ENCODE measurements at regions of chr1 and their contacts with region 1.

Region 1: DNA sequence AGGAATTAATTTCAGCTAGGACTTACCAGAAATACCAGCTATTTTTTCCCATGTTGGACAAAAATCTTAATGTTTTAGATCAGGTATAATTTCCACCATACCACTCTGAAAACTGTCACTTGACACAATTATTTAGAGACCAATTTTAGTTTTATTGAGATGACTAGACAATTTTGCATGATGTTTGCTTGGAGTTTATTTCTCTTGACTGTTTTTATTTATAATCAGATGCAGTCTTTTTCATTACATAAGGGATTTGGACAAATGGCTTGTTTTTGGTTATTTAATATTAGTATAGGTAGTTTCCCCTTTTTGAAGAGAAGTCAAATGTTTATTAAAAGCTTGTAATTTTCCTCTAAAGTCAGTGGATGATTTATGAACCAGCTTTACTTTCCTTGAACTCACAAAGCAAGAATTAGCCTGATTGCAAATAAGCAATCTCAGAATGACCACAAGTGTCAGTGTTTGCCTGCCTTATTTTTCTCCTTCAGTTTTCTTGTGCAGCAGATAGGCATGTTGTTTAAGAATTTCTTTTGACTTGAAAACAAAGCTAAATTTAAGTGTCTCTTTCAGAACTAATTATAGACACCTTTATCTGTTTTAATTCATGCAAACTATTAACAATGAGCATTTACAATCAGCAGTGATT is 3.8 kb upstream of the B3GALT2 start:
- DNase-seq: peak; percentile 44
- H3K4me3 ChIP-seq: no peak overlapping the region
- H3K27ac ChIP-seq: no peak overlapping the region
- H3K4me1 ChIP-seq: peaks cover 44% of the 10 kb centered on the region
- H3K27me3 ChIP-seq: no peaks in the 10 kb centered on the region

Region 2: DNA sequence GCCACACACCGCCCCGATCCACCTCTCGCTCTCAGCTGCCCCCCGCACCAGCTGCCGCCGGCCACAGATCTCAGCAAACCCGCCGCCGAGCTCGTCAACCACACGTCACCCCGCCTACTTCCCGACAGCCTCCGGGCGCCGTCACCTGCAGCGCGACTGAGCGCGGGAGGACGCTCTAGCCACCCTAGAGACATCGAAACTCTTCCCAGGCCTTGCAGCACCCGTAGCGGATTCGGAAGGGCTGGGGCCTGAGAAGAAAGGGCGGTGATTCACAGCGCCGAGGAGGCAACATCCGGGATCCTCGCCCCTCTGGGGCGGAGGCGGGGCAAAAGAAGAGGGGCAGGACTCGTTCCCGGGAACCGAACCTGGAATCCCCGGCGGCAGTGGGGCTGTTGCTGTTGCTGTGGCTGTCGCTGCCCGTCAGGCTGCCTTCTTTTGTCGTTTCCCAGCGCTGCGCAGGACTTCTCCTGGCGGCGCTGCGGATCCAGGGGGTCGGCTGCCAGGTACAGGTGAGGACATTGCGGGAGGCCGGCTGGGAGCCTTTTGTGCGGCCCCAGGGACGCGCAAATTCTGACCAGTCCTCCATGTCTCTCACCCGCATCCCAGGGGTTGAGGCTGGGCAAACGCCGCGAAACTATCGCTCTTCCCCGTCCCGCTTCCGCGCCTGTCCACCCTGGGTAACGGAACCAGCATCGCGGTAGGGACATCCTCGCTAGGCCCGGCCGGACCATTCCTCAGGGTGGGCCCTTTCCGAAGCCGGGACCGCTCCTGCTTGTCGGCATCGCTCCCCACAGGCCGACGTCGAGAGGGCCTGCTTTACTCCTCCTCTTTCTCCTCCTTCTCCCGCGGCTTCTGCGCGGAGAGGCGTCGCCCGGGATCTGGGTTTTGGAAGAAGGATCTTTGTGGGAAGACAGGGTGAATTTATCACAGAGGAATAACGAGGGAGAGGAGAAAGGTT is 130.7 kb before region 1 on chr1 and contains the starts of genes RO60 and UCHL5:
- in situ Hi-C with region 1: no loop called
- DNase-seq: peak; percentile 99
- H3K4me3 ChIP-seq: peak within 1 kb of the TSS; percentile 91
- H3K27ac ChIP-seq: peak within 1 kb of the TSS; percentile 97
- H3K4me1 ChIP-seq: peaks cover 42% of the 10 kb centered on the region
- H3K27me3 ChIP-seq: no peaks in the 10 kb centered on the region
- total RNA-seq, gene RO60: 68.6 and 71.3 TPM in 2 replicates
- total RNA-seq, gene UCHL5: 17.5 and 22.5 TPM in 2 replicates

Region 3: DNA sequence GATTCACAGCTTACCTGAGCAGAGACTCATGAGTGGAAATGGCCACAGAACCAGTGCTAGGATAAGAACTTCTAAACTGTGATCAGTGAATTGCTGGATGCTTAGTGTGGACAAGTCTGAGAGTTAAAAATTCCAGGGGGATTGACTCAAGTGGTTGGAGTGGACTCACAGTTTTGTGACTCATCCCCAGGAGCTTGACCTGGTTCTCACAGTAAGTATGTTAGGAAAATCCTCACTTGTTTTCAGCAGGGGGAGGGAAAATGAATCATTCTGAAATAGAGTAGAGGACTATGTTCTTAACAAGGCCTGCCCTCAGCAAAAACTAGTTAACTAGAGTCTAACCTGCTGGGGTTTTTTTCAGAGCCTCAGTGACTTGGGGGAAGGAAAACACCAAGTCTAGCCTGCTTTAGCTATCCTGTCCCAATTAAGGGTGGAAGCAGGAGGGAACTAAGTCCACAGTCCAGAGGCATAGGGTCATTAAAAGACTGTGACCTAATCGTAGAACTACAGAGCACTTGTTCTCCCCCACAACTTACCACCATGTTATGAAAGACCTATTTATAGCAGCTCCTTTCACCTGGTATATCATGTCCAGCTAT is 74.5 kb before region 1 on chr1:
- in situ Hi-C with region 1: no loop called
- DNase-seq: peak; percentile 99
- H3K4me3 ChIP-seq: peak overlapping the region; percentile 45; the same call in 1 of the 2 replicates
- H3K27ac ChIP-seq: peak overlapping the region; percentile 86
- H3K4me1 ChIP-seq: peaks cover 46% of the 10 kb centered on the region
- H3K27me3 ChIP-seq: no peaks in the 10 kb centered on the region

Region 4: DNA sequence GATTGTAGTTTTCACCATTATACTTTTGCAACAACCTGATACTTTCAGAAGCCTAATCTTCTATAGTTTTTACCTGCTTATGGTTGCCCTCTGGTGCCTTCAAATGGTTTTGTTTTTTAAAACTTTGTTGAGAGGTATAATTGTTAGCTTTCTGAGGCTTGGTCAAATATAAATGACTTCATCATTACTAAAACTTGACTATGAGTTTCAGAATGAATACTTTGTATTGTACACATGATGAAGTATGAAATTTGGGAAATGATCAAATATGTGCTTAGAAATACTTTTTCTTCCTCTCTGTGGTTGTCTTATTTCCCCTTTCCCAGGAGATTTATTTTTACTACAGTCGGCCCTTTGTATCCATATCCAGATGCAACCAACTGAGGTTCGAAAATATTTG is 148.0 kb after region 1 on chr1:
- in situ Hi-C with region 1: loop called (anchors 10 kb)
- DNase-seq: peak; percentile 52
- H3K4me3 ChIP-seq: no peak overlapping the region
- H3K27ac ChIP-seq: peak overlapping the region; percentile 10; the same call in 1 of the 2 replicates
- H3K4me1 ChIP-seq: peaks cover 45% of the 10 kb centered on the region
- H3K27me3 ChIP-seq: no peaks in the 10 kb centered on the region

Measured in GM23248 (cell line).